ENCODE measurements at regions of chr2 and their contacts with region 1.

Region 1: DNA sequence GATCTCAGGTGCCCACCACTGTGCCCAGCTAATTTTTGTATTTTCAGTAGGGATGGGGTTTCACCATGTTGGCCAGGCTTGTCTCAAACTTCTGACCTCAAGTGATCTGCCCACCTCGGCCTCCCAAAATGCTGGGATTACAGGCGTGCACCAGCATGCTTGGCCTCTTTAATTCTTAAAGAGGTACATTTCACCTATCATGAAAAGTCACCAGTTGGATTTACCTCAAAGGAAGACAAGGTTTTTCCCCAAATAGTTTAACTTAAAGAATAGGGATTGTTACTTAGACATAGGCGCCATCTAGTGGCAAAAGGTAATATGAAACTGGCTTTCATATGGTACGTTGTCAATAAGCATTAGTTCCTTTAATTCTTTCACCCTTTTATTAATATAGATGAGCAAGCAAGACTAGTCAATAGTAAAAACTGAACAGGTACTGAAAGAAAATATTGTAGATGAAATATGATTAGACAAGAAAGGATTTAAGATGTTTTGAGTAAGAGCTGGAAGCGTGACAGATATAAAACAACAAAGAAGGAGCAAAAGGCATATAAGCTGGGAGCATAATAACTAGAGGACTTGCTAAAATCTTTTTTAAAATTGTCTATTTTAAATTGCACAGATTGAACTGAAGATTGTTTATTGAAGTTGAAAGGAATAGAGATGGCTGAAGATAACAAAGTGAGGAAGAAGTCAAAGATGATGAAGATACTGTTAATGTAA is 35.0 kb upstream of the PSMD14 start:
- DNase-seq: peak; percentile 42 to 79 (median 45)
- ATAC-seq: peak; percentile 84
- H3K4me3 ChIP-seq: no peak overlapping the region
- H3K27ac ChIP-seq: no peak overlapping the region
- H3K4me1 ChIP-seq: no peaks in the 10 kb centered on the region
- H3K27me3 ChIP-seq: no peaks in the 10 kb centered on the region
- CTCF ChIP-seq: peak; percentile 59 to 74 (median 64); a peak in 5 of 6 replicates
- EP300 ChIP-seq: no peak
- POLR2A ChIP-seq: no peak
- RAD21 ChIP-seq: peak; percentile 53 to 92

Region 2: GRCh38 chr2:160719116-160719515 is 554.1 kb before region 1 on chr2:
- CTCF ChIA-PET with region 1: no interaction called
- POLR2A ChIA-PET with region 1: no interaction called
- in situ Hi-C with region 1: no loop called
- intact Hi-C with region 1: no loop called
- DNase-seq: no peak
- ATAC-seq: no peak
- H3K4me3 ChIP-seq: no peak overlapping the region
- H3K27ac ChIP-seq: no peak overlapping the region
- H3K4me1 ChIP-seq: no peaks in the 10 kb centered on the region
- H3K27me3 ChIP-seq: no peaks in the 10 kb centered on the region
- CTCF ChIP-seq: no peak
- EP300 ChIP-seq: no peak
- POLR2A ChIP-seq: no peak
- RAD21 ChIP-seq: no peak

Region 3: DNA sequence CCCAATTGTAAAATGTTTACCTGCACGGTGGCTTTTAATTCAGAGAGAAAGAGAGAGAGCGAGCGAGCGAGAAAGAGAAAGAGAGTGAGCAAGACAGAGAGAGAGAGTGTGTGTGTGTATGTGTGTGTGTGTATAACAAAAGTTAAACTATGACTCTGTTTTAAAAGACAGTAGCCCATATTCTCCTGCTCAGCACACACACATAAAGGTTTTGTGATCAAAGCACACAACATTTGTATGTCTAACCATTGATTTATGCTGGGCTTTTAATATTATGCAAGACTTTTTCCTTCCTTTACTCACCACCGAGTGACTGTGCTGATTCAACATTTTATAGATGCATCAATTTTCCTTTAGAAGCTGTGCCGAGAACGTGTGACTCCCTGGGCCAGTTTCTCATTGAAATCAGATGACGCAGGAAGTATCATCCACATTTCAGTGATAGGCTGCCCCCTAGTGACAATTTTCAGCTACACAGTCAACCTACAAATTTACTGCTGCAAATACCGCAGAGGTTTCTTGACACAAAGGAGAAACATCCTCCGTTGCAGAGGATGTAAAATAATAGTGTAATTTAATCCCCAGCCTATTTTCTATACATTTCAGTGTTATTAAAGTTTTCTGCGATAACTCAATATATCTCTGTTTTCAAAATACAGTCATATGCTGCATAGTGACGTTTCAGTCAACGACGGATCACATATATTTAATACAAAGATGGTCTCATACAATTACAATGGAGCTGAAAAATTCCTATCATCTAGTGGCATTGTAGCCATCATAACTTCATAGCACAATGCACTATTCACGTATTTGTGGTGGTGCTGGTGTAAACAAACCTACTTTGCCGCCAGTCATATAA is 278.8 kb before region 1 on chr2:
- CTCF ChIA-PET with region 1: no interaction called
- POLR2A ChIA-PET with region 1: no interaction called
- in situ Hi-C with region 1: no loop called
- intact Hi-C with region 1: loop called (anchors 10 kb)
- DNase-seq: peak; percentile 44 to 73 (median 56)
- ATAC-seq: peak; percentile 97
- H3K4me3 ChIP-seq: no peak overlapping the region
- H3K27ac ChIP-seq: no peak overlapping the region
- H3K4me1 ChIP-seq: no peaks in the 10 kb centered on the region
- H3K27me3 ChIP-seq: no peaks in the 10 kb centered on the region
- CTCF ChIP-seq: peak; percentile 69 to 91 (median 80); a peak in 5 of 6 replicates
- EP300 ChIP-seq: no peak
- POLR2A ChIP-seq: no peak
- RAD21 ChIP-seq: peak; percentile 70 to 83

Region 4: GRCh38 chr2:161223139-161223732 is 50.0 kb before region 1 on chr2:
- CTCF ChIA-PET with region 1: interaction called, 4 read pairs
- POLR2A ChIA-PET with region 1: no interaction called
- in situ Hi-C with region 1: no loop called
- intact Hi-C with region 1: loop called (anchors 1 kb)
- DNase-seq: peak; percentile 24 to 58 (median 32)
- ATAC-seq: peak; percentile 77
- H3K4me3 ChIP-seq: no peak overlapping the region
- H3K27ac ChIP-seq: no peak overlapping the region
- H3K4me1 ChIP-seq: no peaks in the 10 kb centered on the region
- H3K27me3 ChIP-seq: no peaks in the 10 kb centered on the region
- CTCF ChIP-seq: peak; percentile 43 to 73 (median 48); a peak in 4 of 6 replicates
- EP300 ChIP-seq: no peak
- POLR2A ChIP-seq: no peak
- RAD21 ChIP-seq: peak; percentile 52 to 64; a peak in 2 of 4 replicates

Region 5: GRCh38 chr2:161946489-161947107 is 673.4 kb after region 1 on chr2:
- CTCF ChIA-PET with region 1: no interaction called
- POLR2A ChIA-PET with region 1: no interaction called
- in situ Hi-C with region 1: no loop called
- intact Hi-C with region 1: loop called (anchors 10 kb)
- DNase-seq: peak in 1 of 4 experiments; percentile 3
- ATAC-seq: no peak
- H3K4me3 ChIP-seq: no peak overlapping the region
- H3K27ac ChIP-seq: no peak overlapping the region
- H3K4me1 ChIP-seq: no peaks in the 10 kb centered on the region
- H3K27me3 ChIP-seq: no peaks in the 10 kb centered on the region
- CTCF ChIP-seq: peak in 1 of 3 experiments; percentile 38; a peak in 2 of 6 replicates
- EP300 ChIP-seq: no peak
- POLR2A ChIP-seq: no peak
- RAD21 ChIP-seq: peak; percentile 34 to 54; a peak in 3 of 4 replicates

Region 6: GRCh38 chr2:162318328-162319180 is 1045.4 kb after region 1 on chr2 and contains the start of gene IFIH1:
- CTCF ChIA-PET with region 1: no interaction called
- POLR2A ChIA-PET with region 1: no interaction called
- in situ Hi-C with region 1: loop called (anchors 25 kb)
- intact Hi-C with region 1: no loop called
- DNase-seq: peak; percentile 17 to 71 (median 40)
- ATAC-seq: peak; percentile 95
- H3K4me3 ChIP-seq: peak within 1 kb of the TSS; percentile 55
- H3K27ac ChIP-seq: peak within 1 kb of the TSS; percentile 34; the same call in 1 of the 3 replicates
- H3K4me1 ChIP-seq: peaks cover 0 to 4% of the 10 kb centered on the region in 2 experiments; a peak in 2 of 5 replicates
- H3K27me3 ChIP-seq: no peaks in the 10 kb centered on the region
- CTCF ChIP-seq: peak in 2 of 3 experiments; percentile 33 to 47; a peak in 4 of 6 replicates
- EP300 ChIP-seq: no peak
- POLR2A ChIP-seq: no peak
- RAD21 ChIP-seq: peak in 1 of 2 experiments; percentile 20; a peak in 1 of 4 replicates
- polyA plus RNA-seq, gene IFIH1: 0.29 TPM in 1 of 2 experiments, not detected in the other

Measured in K562 (cell line).